GM10248 (cell line): ENCODE measurements at regions of chr17 and their contacts with region 1.

Region 1: GRCh38 chr17:8173056-8173870 is 2.9 kb downstream of the TMEM107 start:
- DNase-seq: peak; percentile 82
- CTCF ChIP-seq: no peak

Region 2: DNA sequence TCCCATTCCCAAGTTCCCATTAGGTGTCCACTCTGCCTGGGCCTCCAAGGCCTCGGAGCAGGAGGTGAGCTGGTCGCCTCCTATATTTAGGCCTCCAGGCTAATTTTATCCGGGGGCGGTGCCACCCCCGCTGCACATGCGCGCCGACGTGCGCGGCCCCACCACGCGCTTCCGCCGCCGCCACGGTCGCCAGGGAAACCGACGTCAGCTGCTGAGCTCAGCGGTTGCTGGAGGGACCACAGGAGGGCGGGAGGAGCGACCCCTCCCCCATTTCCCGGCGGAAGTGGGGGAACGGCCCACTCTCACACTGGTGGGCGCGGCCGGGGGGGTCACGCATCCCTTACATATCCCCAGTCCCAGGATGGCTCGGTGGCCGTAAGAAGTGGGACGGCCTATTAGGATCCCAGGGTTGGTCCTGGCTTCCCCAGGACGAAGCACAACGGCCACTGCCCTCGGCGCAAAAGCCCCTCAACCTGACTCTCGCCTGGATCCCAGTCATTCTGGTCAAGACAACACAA is 22.1 kb before region 1 on chr17:
- CTCF ChIA-PET with region 1: interaction called, 7 read pairs
- POLR2A ChIA-PET with region 1: interaction called, 28 read pairs
- DNase-seq: peak; percentile 90
- CTCF ChIP-seq: no peak

Region 3: DNA sequence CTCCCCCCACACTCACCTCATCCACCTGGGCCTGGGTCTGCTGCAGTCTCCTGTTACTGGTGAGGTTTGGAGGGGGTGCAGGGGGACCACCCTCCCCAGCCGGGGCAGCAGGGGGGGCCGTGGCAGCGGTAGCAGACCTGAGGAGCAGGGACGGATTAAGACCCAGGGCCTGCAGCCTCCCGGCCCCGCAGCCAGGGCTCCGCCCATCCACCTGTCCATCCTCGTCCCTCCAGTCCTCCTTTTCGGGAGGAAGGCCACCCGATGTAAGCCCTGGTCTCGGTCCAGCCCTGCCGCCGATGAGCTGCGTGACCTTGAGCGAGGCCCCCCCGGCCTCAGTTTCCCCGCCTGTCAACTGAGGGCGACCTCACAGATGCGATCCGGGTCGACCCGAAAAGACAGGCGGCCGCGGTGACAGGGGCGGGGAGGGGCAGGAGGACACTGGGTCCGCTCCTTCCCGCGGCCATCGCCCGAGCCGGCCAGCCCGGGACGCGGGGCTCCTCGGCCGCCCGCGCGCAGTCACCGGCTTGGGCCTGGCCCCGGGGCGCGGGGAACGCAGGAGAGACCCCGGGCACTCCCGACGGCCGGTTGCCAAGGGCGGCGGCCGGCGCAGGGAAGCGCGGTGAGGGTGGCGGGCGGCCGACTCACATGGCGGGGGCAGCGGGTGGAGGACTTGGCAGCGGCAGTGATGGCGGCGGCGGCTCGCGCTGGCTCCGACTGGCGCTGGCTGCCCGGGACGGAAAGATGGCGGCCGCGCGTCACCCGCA is 10.8 kb before region 1 on chr17 and contains the start of gene VAMP2:
- CTCF ChIA-PET with region 1: interaction called, 15 read pairs
- POLR2A ChIA-PET with region 1: interaction called, 16 read pairs
- DNase-seq: peak; percentile 81
- CTCF ChIP-seq: no peak

Region 4: DNA sequence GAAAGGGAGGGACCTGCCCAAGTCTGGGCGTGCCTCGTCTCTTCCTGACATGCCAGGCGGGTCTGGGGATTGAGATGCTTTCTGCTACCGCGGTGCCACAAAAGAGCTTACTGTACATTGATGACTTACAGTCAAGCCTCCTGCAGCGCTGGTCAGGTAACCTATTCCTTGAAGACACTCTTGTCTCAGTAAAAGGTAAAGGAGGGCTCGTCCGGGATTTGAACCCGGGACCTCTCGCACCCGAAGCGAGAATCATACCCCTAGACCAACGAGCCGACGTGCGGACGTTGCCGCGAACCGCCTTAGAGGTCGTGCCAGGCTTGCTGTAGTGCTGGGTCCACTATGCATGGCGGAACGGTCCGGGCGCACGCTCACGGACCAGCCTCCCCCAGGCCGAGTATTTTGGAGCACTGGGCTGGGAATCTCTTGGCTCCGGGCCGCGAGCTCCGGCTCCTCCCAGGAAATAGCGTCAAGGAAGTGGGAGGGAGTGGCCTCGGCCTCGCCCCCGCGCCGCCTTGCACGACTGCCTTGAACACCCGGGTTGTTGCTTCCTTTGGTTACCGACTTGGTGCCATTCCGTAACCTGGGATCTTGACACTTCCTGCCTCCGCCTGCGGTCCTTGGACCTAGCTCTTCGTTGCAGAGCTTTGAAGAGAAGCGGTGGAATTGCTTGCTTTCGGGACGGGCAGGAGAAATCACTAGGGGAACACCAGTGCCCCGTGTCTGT is 49.5 kb after region 1 on chr17:
- CTCF ChIA-PET with region 1: interaction called, 3 read pairs
- POLR2A ChIA-PET with region 1: interaction called, 27 read pairs
- DNase-seq: peak; percentile 73
- CTCF ChIP-seq: no peak

Region 5: DNA sequence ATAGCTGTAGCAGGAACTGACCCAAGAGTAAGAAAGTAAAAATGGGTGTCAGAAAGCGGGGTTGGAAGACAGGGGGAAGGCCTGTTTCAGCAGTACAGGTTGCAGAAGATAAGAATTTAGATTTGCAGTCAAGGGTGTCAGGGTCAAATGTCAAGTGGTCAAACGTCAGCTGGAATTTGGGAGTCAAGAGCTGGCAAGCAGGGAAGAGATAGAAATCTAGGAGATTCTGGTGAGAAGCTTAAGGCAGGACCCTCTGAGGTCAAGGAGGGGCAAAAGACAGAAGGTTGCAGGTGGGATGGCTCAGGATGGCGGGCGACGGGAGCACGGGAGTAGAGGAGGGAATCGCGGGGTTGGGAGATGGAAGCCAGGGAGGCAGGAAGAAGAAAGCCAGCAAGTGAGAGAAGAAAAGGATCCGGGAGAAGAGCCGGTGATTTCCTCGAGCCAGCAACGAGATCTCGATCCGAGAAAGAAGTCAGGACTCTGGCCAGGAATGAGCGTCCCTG is 121.6 kb after region 1 on chr17:
- CTCF ChIA-PET with region 1: no interaction called
- POLR2A ChIA-PET with region 1: interaction called, 15 read pairs
- DNase-seq: no peak
- CTCF ChIP-seq: no peak